Activated CD8-positive, alpha-beta memory T cell treated with anti-CD3 and anti-CD28 coated beads, Interleukin-2, amount 10 ng/mL, durations not matched to agents 7 days and 5 days (primary cell): ENCODE measurements at regions of chr6 and their contacts with region 1.

Region 1: DNA sequence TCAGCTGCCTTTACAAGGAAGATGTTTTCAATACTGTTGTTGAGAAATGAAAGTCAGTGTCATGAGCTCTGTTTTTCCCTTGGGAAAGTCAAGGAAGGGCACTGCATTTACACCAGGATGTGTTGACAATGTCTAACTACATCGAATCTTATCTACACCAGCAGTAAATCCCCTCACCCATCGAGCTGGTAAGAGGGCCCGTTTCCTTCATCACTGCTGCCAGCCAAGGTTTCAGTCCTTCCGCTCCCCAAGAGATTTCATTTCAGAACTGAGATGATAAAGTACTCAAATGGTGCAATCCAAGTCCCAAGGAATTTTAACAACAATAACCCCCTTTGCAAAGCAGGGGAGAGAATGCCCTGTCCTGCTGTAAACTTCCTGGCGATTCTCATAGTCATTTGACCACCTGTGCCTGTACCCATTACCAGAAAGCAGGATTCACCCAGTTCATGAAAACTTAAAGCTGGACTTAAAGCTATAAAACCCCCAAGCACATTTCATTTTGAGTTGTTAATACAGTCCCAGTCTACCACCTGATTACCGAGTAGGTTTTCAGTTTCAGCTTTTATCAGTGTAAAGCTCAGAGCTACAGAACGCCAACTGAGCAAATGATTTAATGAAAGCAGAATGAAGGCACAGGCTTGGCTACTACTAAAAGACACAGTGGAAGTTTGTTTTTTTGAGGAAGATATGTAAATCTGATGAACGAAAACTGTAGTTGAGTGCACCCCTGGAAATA is 122.5 kb upstream of the TAB2 start:
- DNase-seq: no peak
- ATAC-seq: peak; percentile 45
- H3K4me3 Mint-ChIP-seq: peak overlapping the region; percentile 61
- H3K27ac Mint-ChIP-seq: peak overlapping the region; percentile 81
- H3K4me1 Mint-ChIP-seq: peaks cover 33% of the 10 kb centered on the region
- H3K27me3 Mint-ChIP-seq: no peaks in the 10 kb centered on the region

Region 2: DNA sequence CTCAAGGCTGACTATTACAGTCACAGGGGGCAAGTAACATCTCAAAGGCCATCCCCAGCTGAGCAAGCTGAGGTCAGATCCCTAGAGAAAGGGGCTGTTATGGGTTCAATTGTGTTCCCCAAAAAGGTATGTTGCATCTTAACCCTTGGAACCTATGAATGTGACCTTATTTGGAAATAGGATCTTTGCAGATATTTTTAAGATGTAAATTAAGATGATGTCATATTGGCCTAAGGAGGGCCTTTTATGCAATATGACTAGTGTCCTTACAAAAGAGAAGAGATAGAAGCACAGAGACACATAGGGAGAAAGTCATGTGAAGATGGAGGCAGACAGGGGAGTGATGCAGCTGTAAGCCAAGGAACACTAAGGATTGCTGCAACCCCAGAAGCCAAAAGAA is 21.8 kb before region 1 on chr6:
- CTCF ChIA-PET with region 1: interaction called, 13 read pairs
- DNase-seq: no peak
- ATAC-seq: no peak
- H3K4me3 Mint-ChIP-seq: no peak overlapping the region
- H3K27ac Mint-ChIP-seq: no peak overlapping the region
- H3K4me1 Mint-ChIP-seq: peaks cover 51% of the 10 kb centered on the region
- H3K27me3 Mint-ChIP-seq: no peaks in the 10 kb centered on the region

Region 3: GRCh38 chr6:149211046-149211571 is 16.1 kb after region 1 on chr6:
- CTCF ChIA-PET with region 1: interaction called, 15 read pairs
- DNase-seq: peak; percentile 76
- ATAC-seq: peak; percentile 72
- H3K4me3 Mint-ChIP-seq: peak overlapping the region; percentile 36
- H3K27ac Mint-ChIP-seq: no peak overlapping the region
- H3K4me1 Mint-ChIP-seq: peaks cover 11% of the 10 kb centered on the region
- H3K27me3 Mint-ChIP-seq: no peaks in the 10 kb centered on the region